Prostate gland (tissue), 2 donors: ENCODE measurements at regions of chr1 and their contacts with region 1.

Region 1: DNA sequence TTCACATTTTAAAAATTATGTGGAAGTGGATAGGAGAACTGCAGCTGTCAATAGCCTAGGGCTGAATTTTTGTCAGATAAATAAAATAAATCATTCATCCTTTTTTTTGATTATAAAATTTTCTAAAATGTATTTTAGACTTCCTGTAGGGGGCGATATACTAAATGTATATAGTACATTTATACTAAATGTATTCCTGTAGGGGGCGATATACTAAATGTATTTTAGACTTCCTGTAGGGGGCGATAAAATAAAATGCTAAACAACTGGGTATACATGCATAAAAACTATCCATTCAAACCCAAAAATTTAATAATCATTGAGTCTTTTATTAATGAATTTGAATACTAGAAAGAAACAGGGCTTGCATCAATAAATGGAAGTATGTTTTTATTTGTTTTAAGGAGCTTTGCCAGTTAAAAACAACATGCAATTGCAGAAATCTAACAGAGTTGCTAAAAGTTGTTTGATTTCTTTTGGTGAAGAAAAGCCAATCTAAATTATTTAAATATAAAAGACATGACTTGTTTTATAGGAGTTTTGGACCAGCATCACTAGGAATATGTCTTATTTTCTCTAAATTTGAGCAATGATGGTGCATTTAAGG is 31.4 kb downstream of the CLCA1 start:
- DNase-seq: no peak
- H3K4me3 ChIP-seq: no peak overlapping the region
- H3K27ac ChIP-seq: no peak overlapping the region
- H3K4me1 ChIP-seq: no peaks in the 10 kb centered on the region
- H3K27me3 ChIP-seq: no peaks in the 10 kb centered on the region
- CTCF ChIP-seq: peak; percentile 39 to 95 (median 68)
- POLR2A ChIP-seq: no peak

Region 2: DNA sequence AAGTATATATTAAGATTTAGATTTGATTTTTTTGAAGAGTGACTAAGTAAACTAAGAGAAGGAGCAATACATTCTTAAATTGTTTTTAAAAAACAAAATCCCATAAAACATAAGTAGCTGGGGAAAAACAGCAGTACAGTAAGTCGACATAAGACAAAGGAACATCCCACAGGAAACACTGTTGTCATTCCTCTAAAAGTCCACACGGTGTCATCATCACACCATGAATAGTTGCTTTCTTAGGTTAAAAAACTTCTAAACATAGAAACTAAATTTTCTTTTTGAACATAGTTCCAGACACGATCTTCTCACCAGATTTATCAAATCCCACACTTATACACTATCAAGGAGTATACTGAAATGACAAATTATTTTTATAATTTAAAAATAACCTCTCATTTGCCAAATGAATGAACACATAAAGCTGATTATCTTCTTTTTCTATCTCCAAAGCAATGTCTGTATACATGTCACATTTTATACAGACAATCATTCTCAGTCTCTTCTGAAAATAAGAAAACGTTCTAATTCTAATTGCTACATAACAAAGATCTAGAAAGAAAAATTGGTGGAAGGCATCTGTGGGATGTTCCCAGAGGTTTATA is 119.7 kb before region 1 on chr1:
- intact Hi-C with region 1: loop called (anchors 10 kb)
- DNase-seq: no peak
- H3K4me3 ChIP-seq: no peak overlapping the region
- H3K27ac ChIP-seq: no peak overlapping the region
- H3K4me1 ChIP-seq: no peaks in the 10 kb centered on the region
- H3K27me3 ChIP-seq: no peaks in the 10 kb centered on the region
- CTCF ChIP-seq: peak; percentile 22 to 84 (median 76)
- POLR2A ChIP-seq: no peak

Region 3: DNA sequence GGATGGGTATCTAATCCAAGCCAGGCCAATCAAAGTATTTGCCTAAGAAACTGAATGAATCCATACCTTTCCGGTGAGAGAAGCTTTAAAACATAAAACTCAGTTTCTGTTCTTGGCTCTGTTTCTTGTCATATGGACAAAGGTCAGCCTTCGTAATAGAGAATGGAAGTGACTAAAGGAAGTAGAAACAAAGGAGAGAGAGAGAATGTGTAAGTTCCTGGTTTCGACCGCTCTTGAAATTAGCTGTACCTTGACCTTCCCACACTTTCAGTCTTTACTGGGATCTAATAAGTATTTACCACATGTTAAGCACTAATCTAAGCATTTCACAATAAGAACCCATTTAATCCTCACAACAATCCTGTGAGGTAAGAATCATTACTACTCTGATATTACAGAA is 27.2 kb after region 1 on chr1:
- intact Hi-C with region 1: no loop called
- DNase-seq: no peak
- H3K4me3 ChIP-seq: no peak overlapping the region
- H3K27ac ChIP-seq: no peak overlapping the region
- H3K4me1 ChIP-seq: no peaks in the 10 kb centered on the region
- H3K27me3 ChIP-seq: no peaks in the 10 kb centered on the region
- CTCF ChIP-seq: no peak
- POLR2A ChIP-seq: no peak

Region 4: DNA sequence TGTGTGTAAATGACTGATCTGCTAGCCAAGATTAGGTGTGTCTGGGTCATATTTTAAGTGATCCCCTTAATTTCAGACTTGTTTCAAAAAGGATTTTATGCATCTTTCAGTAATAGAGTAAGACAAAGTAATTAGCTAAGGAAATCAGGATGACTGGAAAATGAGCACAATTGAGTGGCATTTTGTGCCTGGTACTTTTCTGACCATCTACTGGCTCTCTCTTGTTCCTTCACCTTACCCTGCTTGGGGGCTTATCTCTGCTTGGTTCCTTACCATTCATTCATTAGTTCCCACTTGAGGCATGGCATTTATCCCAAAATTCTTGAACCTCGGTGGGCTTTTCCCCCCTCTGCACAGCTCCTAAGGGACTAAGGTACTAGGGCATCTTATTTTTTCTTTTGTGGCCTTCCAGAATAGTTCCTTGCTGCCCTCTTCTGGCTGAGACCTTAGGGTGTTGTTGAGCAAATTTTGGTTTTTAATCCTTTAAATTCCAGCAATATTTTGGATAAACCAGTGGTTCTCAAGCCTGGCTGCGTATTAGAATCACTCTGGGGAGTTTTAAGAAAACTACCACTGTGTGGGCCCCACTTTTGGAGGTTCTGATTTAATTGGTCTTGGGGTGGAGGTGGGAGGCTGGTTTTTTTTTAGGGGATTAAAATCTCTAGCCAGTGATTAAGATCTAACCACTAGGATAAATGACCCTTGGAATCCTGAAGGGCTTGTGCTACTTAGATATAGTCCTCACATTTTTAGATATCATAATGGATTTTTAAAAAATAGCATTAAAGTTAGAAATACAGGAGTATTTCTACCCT is 465.1 kb after region 1 on chr1:
- intact Hi-C with region 1: loop called (anchors 10 kb)
- DNase-seq: no peak
- H3K4me3 ChIP-seq: no peak overlapping the region
- H3K27ac ChIP-seq: no peak overlapping the region
- H3K4me1 ChIP-seq: no peaks in the 10 kb centered on the region
- H3K27me3 ChIP-seq: no peaks in the 10 kb centered on the region
- CTCF ChIP-seq: peak in 3 of 4 experiments; percentile 44 to 52 (median 45)
- POLR2A ChIP-seq: no peak